ENCODE measurements at regions of chr20 and their contacts with region 1.

Region 1: GRCh38 chr20:59032023-59032712 is at the start of gene ATP5F1E:
- DNase-seq: peak; percentile 98
- ATAC-seq: peak; percentile 99 to 100 (median 100)
- H3K4me3 ChIP-seq: peak within 1 kb of the TSS; percentile 89
- H3K27ac ChIP-seq: peak within 1 kb of the TSS; percentile 92
- H3K4me1 ChIP-seq: peaks cover 37% of the 10 kb centered on the region
- H3K27me3 ChIP-seq: no peaks in the 10 kb centered on the region
- CTCF ChIP-seq: no peak
- total RNA-seq, gene ATP5F1E: 72.1 to 88.5 (median 87.1) TPM

Region 2: DNA sequence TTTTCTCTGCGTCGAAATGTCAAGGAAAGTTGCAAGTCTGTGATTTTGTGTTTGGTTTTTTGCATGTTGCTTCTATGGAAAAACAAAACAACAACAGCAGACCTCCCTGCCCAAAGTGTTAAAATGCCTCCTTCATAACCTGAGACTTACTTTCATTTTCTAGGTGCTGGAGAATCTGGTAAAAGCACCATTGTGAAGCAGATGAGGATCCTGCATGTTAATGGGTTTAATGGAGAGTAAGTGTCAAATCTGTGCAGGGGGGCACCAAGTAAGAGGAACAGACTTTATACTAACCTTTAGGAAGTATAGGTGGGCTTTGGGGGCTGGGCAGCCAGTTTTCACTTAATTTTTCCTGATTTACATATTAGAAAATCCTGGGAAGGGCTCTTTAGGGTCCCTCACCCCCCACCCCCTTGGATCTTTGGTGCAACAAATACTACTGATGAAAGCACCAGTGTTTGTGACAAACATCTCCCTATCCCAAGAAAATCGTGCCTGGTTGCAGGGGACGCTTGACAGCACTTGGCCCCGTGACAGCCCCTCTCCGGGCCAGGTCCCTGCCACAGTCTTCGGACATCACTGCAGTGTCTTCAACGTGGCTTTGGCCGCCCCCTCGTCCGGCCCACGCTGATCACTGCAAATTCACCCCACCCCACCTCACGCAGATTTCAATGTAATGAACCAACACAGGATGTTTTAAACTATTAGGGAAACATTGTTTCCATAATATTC is 136.6 kb before region 1 on chr20:
- intact Hi-C with region 1: loop called in 1 of 2 experiments (anchors 5 kb)
- DNase-seq: peak in 1 of 2 donors; percentile 64
- ATAC-seq: no peak
- H3K4me3 ChIP-seq: peak overlapping the region; percentile 26
- H3K27ac ChIP-seq: peak overlapping the region; percentile 50
- H3K4me1 ChIP-seq: peaks cover 75% of the 10 kb centered on the region
- H3K27me3 ChIP-seq: no peaks in the 10 kb centered on the region
- CTCF ChIP-seq: no peak

Region 3: GRCh38 chr20:59074445-59074844 is 42.3 kb after region 1 on chr20:
- intact Hi-C with region 1: no loop called
- DNase-seq: no peak
- ATAC-seq: no peak
- H3K4me3 ChIP-seq: no peak overlapping the region
- H3K27ac ChIP-seq: no peak overlapping the region
- H3K4me1 ChIP-seq: no peaks in the 10 kb centered on the region
- H3K27me3 ChIP-seq: peaks cover 0 to 14% (median 0%) of the 10 kb centered on the region in 3 donors
- CTCF ChIP-seq: no peak

Region 4: DNA sequence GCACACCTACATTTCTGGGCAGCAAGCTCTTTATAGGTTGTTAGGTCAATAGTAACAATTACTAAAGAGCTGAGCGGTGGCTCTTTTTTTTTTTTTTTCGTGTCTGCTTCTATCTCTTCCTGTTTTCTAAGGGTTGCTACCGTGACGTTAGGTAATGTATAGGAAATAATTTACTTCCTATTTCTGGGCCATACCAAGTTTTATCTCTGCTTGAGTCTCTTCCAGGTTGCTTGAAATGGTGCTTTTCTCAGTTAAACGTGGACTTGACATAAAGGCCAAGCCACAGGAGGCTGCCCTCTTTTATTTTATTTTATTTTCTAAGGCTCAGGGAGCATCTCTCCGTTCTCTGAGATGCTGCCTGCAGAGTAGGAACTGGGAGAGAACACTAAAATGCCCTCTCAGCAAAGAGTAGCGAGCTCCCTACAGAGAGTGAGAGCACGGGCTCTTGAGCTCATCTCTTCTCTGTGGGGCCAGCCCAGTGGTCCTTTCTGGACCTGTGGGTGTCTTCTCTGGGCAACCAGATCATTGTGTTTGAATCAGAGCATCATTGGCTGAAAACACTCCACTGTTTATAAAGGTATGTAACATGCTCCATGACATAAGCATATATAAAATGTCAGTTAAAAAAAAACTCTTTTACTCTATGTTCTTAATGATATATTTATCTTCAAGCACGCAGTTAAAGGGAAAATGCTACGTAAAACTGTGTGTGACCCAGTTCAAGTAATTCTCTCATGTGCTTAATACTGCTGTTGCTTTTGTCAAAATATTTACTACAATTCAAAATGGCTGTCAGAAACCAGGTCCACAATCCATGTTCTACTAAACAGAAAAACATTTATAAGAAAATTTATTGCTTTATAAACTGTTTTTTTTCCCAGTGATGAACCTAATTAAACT is 131.7 kb after region 1 on chr20 and contains the start of gene ZNF831:
- intact Hi-C with region 1: no loop called
- DNase-seq: no peak
- ATAC-seq: no peak
- H3K4me3 ChIP-seq: no peak within 1 kb of the TSS
- H3K27ac ChIP-seq: no peak within 1 kb of the TSS
- H3K4me1 ChIP-seq: no peaks in the 10 kb centered on the region
- H3K27me3 ChIP-seq: peaks cover 0 to 5% (median 0%) of the 10 kb centered on the region in 3 donors
- CTCF ChIP-seq: no peak
- total RNA-seq, gene ZNF831: 0.02 to 0.08 (median 0.07) TPM in 3 of 4 donors, not detected in the other